ENCODE measurements at regions of chr5 and their contacts with region 1.

Region 1: GRCh38 chr5:152349683-152350526 is 55.2 kb downstream of the NMUR2 start:
- DNase-seq: peak; percentile 30
- ATAC-seq: peak; percentile 71 to 76

Region 2: GRCh38 chr5:152193367-152194107 is 156.4 kb before region 1 on chr5:
- intact Hi-C with region 1: loop called in 1 of 2 experiments (anchors 5 kb)
- DNase-seq: no peak
- ATAC-seq: no peak

Region 3: GRCh38 chr5:152277936-152278335 is 72.0 kb before region 1 on chr5:
- intact Hi-C with region 1: loop called in 1 of 2 experiments (anchors 5 kb)
- DNase-seq: no peak
- ATAC-seq: no peak